T-cell (primary cell): ENCODE measurements at regions of chr4 and their contacts with region 1.

Region 1: GRCh38 chr4:20883231-20883630 is 183.0 kb downstream of the PACRGL start:
- DNase-seq: no peak
- ATAC-seq: no peak
- H3K4me3 ChIP-seq: no peak overlapping the region
- H3K4me3 Mint-ChIP-seq: no peak overlapping the region
- H3K27ac ChIP-seq: no peak overlapping the region
- H3K27ac Mint-ChIP-seq: no peak overlapping the region
- H3K4me1 ChIP-seq: no peaks in the 10 kb centered on the region
- H3K4me1 Mint-ChIP-seq: peaks cover 0 to 4% (median 0%) of the 10 kb centered on the region in 3 donors
- H3K27me3 ChIP-seq: no peaks in the 10 kb centered on the region
- H3K27me3 Mint-ChIP-seq: no peaks in the 10 kb centered on the region

Region 2: GRCh38 chr4:20839957-20840356 is 43.3 kb before region 1 on chr4:
- CTCF ChIA-PET with region 1: no interaction called
- POLR2A ChIA-PET with region 1: no interaction called
- DNase-seq: no peak
- ATAC-seq: no peak
- H3K4me3 ChIP-seq: no peak overlapping the region
- H3K4me3 Mint-ChIP-seq: no peak overlapping the region
- H3K27ac ChIP-seq: no peak overlapping the region
- H3K27ac Mint-ChIP-seq: no peak overlapping the region
- H3K4me1 ChIP-seq: no peaks in the 10 kb centered on the region
- H3K4me1 Mint-ChIP-seq: no peaks in the 10 kb centered on the region
- H3K27me3 ChIP-seq: no peaks in the 10 kb centered on the region
- H3K27me3 Mint-ChIP-seq: no peaks in the 10 kb centered on the region

Region 3: DNA sequence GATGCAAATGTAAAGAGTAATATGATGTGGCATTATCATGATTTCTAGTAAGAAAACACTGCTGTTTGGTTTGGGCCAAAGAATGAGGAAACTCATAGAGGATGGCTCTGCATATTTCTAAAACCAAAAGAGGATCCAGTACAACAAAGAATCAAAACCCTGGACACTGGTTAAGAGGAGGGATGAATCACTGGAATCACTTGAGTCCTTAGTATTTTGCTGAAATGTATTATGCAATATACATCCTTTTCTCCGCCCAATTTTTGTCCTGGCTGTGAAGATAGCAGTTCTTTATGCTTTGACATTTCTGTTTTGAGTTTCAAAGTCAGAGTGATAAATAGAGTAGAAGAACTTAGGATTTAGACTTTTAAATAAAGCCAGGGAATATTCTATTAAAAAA is 162.9 kb after region 1 on chr4:
- CTCF ChIA-PET with region 1: interaction called in 1 of 2 experiments, 10 read pairs
- POLR2A ChIA-PET with region 1: no interaction called
- DNase-seq: no peak
- ATAC-seq: no peak
- H3K4me3 ChIP-seq: no peak overlapping the region
- H3K4me3 Mint-ChIP-seq: no peak overlapping the region
- H3K27ac ChIP-seq: no peak overlapping the region
- H3K27ac Mint-ChIP-seq: no peak overlapping the region
- H3K4me1 ChIP-seq: no peaks in the 10 kb centered on the region
- H3K4me1 Mint-ChIP-seq: peaks cover 0 to 4% (median 0%) of the 10 kb centered on the region in 3 donors
- H3K27me3 ChIP-seq: no peaks in the 10 kb centered on the region
- H3K27me3 Mint-ChIP-seq: no peaks in the 10 kb centered on the region